Activated B cell treated with CpG ODN at 0.5 μM for 24 hours (primary cell): ENCODE measurements at regions of chr1 and their contacts with region 1.

Region 1: DNA sequence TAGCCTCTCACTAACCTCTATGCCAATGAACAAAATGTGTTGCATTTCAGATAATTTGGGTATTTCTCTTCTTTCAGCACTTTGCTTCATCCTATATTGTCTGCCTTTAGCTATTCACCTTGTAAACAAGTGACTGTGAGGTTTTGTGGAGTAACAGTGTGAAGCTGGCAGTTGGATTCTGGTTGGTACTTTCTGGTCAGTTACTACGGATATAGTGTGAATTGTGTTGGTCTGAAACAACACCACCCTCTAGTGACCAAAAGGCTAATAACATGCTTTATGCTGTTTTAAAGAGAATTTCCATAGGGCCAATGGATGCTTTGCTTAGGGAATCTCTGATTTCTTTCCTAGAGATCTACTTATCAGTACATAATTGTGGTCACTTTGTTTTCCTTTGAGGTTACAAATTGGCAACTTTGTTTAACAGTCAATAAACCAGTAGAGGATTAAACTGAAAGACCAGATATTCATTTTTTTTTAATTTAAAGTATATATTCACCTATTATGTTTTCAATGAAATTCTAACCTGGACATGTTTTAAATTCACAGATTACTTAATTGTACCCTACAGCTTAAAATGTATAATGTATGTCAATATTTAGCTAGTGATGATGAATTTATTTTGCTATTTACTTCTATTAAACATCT is 2.5 kb upstream of the PTGER3 start:
- DNase-seq: no peak
- ATAC-seq: peak; percentile 52
- H3K4me3 Mint-ChIP-seq: no peak overlapping the region
- H3K27ac Mint-ChIP-seq: no peak overlapping the region
- H3K4me1 Mint-ChIP-seq: peaks cover 21% of the 10 kb centered on the region
- H3K27me3 Mint-ChIP-seq: peaks cover 34% of the 10 kb centered on the region
- CTCF ChIP-seq: no peak

Region 2: GRCh38 chr1:70528590-70529333 is 521.3 kb before region 1 on chr1:
- CTCF ChIA-PET with region 1: interaction called, 5 read pairs
- POLR2A ChIA-PET with region 1: no interaction called
- intact Hi-C with region 1: loop called (anchors 1 kb)
- DNase-seq: no peak
- ATAC-seq: peak; percentile 37
- H3K4me3 Mint-ChIP-seq: no peak overlapping the region
- H3K27ac Mint-ChIP-seq: no peak overlapping the region
- H3K4me1 Mint-ChIP-seq: no peaks in the 10 kb centered on the region
- H3K27me3 Mint-ChIP-seq: peaks cover 11% of the 10 kb centered on the region
- CTCF ChIP-seq: no peak

Region 3: GRCh38 chr1:70685300-70686241 is 364.5 kb before region 1 on chr1:
- CTCF ChIA-PET with region 1: interaction called, 9 read pairs
- POLR2A ChIA-PET with region 1: no interaction called
- intact Hi-C with region 1: loop called (anchors 1 kb)
- DNase-seq: peak; percentile 18
- ATAC-seq: peak; percentile 77
- H3K4me3 Mint-ChIP-seq: no peak overlapping the region
- H3K27ac Mint-ChIP-seq: no peak overlapping the region
- H3K4me1 Mint-ChIP-seq: no peaks in the 10 kb centered on the region
- H3K27me3 Mint-ChIP-seq: peaks cover 12% of the 10 kb centered on the region
- CTCF ChIP-seq: no peak

Region 4: DNA sequence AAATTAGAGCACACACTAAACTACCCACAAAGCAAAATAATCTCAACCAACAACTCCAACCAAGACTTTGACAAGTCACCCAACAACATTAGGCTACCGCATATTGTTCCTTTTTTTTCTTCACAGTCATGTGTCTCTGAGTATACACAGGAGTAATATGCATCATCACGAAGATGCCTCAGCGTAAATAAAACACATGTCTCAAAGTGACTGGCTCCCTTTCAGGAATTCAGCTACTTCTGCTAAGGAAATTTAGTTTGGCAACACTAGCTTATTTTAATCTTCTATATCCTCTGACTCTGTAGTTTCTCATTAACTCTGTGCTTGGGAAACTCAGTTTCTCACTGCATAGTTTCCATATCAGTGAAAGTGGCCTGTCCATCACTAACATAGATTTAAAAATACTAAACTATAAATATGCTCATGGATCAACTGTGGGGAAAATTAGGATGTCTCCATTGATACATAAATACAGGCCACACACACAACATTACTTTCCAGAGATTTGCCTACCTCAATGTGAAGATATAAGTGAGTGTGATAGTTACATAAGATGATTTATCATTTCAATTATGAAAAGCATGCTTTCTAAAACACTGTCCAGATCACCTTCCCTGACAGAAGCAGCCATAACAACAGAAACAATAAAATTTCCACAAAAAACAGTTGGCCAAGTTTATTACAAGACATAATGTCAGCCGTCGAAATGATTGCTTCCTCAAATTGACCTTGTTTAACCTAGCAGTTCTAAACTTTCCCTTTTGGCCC is 115.7 kb before region 1 on chr1:
- CTCF ChIA-PET with region 1: no interaction called
- POLR2A ChIA-PET with region 1: no interaction called
- intact Hi-C with region 1: no loop called
- DNase-seq: no peak
- ATAC-seq: no peak
- H3K4me3 Mint-ChIP-seq: no peak overlapping the region
- H3K27ac Mint-ChIP-seq: no peak overlapping the region
- H3K4me1 Mint-ChIP-seq: no peaks in the 10 kb centered on the region
- H3K27me3 Mint-ChIP-seq: no peaks in the 10 kb centered on the region
- CTCF ChIP-seq: no peak